ENCODE measurements at regions of chr5 and their contacts with region 1.

Region 1: DNA sequence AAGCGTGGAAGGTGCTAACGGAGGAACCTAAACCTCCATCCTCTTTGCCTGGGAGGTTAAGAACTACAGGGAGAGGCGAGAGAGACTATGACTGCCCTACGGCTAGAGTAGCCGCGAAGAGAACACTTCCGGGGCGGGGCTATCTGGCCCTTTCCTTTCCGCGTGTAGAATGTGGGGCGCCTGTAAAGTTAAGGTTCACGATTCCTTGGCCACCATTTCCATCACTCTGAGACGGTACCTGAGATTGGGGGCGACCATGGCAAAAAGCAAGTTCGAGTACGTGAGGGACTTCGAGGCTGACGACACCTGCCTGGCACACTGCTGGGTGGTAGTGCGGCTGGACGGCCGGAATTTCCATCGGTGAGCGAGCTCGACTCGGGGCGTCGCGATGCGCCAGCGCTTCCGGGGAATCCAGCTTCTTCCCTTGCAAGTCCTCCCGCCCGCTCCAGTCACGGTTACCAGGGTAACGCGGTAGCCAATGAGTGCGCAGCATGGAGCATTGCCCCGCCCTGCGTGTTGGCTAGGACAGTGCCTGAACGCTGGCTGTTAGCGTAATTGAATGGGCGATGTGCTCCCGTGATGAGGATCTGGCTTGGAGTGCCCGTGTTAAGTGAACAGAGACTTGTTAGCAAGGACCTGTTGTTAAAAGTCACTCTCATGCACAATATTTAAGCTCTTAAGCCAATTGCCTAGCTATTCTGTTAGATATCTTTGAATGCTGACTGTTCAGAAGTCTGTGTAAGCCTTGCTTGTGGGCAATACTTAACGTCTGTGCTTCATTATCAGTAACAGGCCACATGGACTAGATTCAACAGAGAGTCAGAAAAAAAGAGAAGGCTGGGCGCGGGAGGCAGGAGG is at the start of gene THG1L:
- DNase-seq: peak; percentile 93
- ATAC-seq: peak; percentile 84
- H3K4me3 Mint-ChIP-seq: peak within 1 kb of the TSS; percentile 98
- H3K27ac Mint-ChIP-seq: peak within 1 kb of the TSS; percentile 99
- H3K4me1 Mint-ChIP-seq: peaks cover 46% of the 10 kb centered on the region
- H3K27me3 Mint-ChIP-seq: no peaks in the 10 kb centered on the region
- CTCF ChIP-seq: no peak
- total RNA-seq, gene THG1L: 25.6 and 28.9 TPM in 2 replicates

Region 2: DNA sequence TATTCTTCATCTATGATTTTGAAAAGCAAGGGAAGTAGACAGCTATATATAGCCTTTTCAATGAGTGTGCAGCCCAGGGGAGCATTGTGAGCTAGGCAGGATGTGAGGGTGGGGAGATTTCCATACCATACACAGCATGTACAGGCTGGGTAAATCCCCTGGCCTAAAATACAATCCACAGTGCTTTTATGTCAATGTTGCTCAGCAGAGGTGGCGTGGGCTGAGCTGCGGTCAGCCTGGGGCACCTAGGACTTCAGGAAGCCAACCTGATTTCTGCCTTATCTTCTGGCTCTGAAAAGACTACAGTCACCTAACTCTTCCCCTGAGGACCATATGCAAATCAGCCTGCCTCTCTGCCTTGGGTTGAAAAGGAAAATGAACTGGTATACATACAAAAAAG is 559.1 kb before region 1 on chr5:
- CTCF ChIA-PET with region 1: no interaction called
- POLR2A ChIA-PET with region 1: no interaction called
- intact Hi-C with region 1: loop called (anchors 5 kb)
- DNase-seq: peak; percentile 44
- ATAC-seq: peak; percentile 96
- H3K4me3 Mint-ChIP-seq: peak overlapping the region; percentile 62
- H3K27ac Mint-ChIP-seq: peak overlapping the region; percentile 86
- H3K4me1 Mint-ChIP-seq: peaks cover 30% of the 10 kb centered on the region
- H3K27me3 Mint-ChIP-seq: no peaks in the 10 kb centered on the region
- CTCF ChIP-seq: no peak

Region 3: GRCh38 chr5:157486221-157486681 is 245.2 kb before region 1 on chr5:
- CTCF ChIA-PET with region 1: no interaction called
- POLR2A ChIA-PET with region 1: interaction called, 7 read pairs
- intact Hi-C with region 1: loop called (anchors 2 kb)
- DNase-seq: no peak
- ATAC-seq: peak; percentile 33
- H3K4me3 Mint-ChIP-seq: peak overlapping the region; percentile 56
- H3K27ac Mint-ChIP-seq: peak overlapping the region; percentile 95
- H3K4me1 Mint-ChIP-seq: peaks cover 86% of the 10 kb centered on the region
- H3K27me3 Mint-ChIP-seq: no peaks in the 10 kb centered on the region
- CTCF ChIP-seq: no peak

Region 4: GRCh38 chr5:157509587-157509986 is 221.9 kb before region 1 on chr5:
- CTCF ChIA-PET with region 1: no interaction called
- POLR2A ChIA-PET with region 1: interaction called, 5 read pairs
- intact Hi-C with region 1: loop called (anchors 2 kb)
- DNase-seq: no peak
- ATAC-seq: no peak
- H3K4me3 Mint-ChIP-seq: no peak overlapping the region
- H3K27ac Mint-ChIP-seq: peak overlapping the region; percentile 93
- H3K4me1 Mint-ChIP-seq: peaks cover 85% of the 10 kb centered on the region
- H3K27me3 Mint-ChIP-seq: no peaks in the 10 kb centered on the region
- CTCF ChIP-seq: no peak

Region 5: DNA sequence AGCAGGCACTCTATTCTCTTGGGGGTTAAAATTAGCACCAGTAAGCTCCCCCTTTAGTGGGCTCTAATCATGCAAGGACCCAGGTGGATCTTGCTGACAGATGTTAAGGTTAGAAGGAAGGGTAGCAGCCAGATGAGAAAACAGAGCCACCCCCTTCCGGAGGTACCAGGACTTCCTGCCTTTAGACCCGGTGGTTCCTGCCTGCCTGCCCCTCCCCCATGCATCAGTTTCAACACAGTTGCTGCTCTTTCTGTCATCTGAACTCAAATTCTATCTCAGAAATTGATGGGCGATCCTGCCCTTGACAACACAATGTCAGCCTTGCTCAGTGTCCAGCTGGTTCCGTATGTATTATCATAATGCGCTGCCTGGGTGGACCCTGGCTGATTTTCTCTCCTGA is 1080.9 kb after region 1 on chr5:
- CTCF ChIA-PET with region 1: no interaction called
- POLR2A ChIA-PET with region 1: no interaction called
- intact Hi-C with region 1: loop called (anchors 5 kb)
- DNase-seq: peak; percentile 42
- ATAC-seq: peak; percentile 79
- H3K4me3 Mint-ChIP-seq: peak overlapping the region; percentile 55
- H3K27ac Mint-ChIP-seq: peak overlapping the region; percentile 89
- H3K4me1 Mint-ChIP-seq: peaks cover 99% of the 10 kb centered on the region
- H3K27me3 Mint-ChIP-seq: no peaks in the 10 kb centered on the region
- CTCF ChIP-seq: no peak